Left cardiac atrium (tissue), 4 donors: ENCODE measurements at regions of chr10 and their contacts with region 1.

Region 1: DNA sequence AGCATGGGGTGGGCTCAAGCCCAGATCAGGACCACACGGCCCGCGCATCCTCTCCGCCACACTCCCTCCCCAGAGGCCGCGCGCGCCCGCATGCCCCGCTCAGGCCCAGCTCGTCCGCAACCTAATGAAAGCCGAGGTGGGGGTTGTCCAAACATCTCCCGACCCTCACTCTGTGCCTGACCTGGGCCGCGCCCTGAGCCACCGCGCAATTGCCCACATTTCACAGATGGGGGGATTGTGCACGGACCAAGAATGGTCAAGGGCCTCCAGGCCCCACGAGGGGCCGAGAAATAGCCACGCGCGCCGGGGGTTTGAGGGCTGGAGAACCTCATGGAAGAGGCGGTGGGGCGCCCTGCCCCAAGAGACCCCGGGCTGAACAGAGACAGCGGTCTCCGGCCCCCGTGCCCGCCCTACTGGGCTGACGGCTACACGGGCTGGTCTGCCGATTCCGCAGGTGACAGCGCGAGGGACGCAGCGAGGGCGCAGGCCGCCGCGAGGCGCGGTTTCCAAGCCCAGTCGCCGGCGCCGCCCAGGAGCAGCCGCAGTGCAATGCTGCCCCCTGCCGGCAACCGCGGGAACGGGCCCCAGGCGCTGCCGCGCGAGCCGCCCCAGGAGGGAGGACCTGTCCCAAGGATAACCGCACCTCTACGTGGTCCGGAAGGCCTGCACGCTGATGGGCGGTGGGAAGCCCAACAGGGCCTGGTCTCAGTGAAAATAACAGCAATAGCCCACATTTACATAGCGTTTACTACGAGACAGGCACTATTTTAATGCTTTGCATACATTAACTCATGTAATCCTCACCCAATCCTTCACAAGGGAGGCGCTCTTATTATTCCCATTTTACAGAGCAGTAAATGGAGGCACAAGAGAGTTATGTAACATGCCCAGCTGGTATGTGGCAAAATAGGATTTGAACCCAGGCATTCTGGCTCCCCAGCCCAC is 10.5 kb upstream of the GRID1 start:
- DNase-seq: peak; percentile 73
- ATAC-seq: peak; percentile 93 to 94

Region 2: DNA sequence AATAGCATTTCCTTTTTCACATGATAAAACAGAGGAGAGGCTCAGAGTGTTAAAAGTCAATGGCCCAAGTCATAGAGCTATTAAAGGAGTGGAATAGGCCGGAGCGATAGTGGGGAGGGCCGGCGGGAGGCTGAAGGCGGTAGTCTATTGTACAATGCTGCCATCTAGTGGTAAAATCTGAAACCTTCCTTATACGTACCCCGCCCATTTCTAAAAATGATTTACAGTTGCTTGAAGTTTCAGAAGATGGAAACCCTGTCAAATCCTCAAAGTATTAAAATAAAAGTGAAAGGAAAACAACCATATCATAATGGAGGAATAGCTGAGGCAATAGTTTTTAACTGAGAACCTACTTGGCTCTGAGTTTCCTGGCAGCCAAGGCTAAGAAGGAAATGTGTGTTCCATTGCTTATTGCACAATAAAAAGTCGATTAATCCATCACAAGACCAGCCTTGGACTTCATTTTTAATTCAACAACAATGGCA is 1839.6 kb before region 1 on chr10:
- intact Hi-C with region 1: loop called in 1 of 2 experiments (anchors 5 kb)
- DNase-seq: peak; percentile 68
- ATAC-seq: peak; percentile 84 to 92

Region 3: DNA sequence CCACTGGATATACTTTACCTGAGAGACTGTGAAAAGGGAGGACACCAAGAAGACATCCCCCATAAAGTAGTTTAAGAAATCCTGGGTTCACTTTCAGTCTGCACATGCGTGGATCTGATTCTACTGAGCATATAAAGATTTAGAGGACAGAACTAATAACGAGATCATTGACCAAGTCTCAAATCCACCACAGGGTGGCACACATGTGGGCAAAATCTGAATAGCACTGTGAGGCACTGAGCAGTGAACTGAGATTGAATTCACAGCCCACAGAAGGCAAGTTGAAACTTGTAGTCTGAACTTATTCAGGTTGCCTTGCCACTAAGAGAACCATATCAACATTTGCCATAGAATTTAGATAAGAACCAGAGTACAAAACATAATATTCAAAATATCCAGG is 829.1 kb before region 1 on chr10:
- intact Hi-C with region 1: loop called (anchors 5 to 10 kb)
- DNase-seq: no peak
- ATAC-seq: peak in 1 of 2 donors; percentile 77

Region 4: GRCh38 chr10:85786401-85786899 is 590.7 kb before region 1 on chr10:
- intact Hi-C with region 1: loop called in 1 of 2 experiments (anchors 10 kb)
- DNase-seq: no peak
- ATAC-seq: peak in 1 of 2 donors; percentile 51

Region 5: DNA sequence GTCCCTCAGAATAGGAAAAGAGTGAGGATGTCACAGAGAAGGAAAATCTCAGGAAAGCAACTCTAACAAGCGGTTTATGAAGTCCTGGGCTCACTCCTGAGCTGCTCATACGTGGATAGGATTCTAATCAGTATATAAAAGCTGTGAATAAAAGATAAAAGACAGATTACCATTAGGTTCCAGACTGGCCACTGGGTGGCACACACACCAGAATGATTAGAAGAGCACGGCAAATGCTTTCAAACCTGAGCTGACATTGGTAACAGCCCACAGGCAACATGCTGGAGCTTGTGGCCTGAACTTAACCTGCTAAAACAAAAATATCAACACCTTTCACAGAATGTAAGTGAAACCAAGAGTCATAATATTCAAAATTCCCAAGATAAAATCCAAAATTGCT is 381.3 kb before region 1 on chr10:
- intact Hi-C with region 1: loop called in 1 of 2 experiments (anchors 10 kb)
- DNase-seq: no peak
- ATAC-seq: peak in 1 of 2 donors; percentile 33